GM12878 (cell line): ENCODE measurements at regions of chr10 and their contacts with region 1.

Region 1: DNA sequence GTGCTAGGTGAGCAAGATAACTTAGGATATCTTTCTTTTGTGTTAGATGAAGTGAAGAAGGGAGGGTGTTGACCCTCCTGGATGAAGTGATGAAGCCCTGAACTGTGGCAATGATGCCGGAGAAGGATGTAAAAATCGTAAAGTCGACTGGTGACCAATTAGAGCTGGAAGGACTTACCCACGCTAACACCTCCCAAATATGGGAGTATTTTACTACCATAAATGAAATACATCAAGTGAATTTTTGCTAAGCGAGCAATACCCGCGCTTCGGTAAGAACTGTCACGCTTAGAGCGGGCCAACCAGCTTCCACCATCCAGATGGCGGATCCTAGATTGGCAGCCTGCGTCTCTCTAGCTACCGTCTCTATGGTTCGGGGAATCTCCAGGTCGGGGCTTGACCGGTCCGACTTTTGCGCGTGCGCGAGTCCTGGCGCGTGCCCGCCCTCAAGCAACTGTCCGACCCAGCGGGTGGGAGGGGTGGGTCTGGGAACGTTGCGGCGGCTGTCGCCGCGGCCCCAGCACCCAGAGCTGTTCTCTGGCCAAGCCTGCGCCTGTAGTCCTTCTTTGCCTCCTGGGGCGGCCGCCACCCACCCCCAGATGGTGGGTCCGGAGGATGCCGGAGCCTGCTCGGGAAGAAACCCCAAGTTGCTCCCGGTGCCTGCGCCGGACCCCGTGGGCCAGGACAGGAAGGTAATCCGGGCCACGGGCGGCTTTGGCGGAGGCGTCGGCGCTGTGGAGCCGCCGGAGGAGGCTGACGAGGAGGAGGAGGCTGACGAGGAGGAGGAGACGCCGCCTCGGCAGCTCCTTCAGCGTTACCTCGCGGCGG is at the start of gene TBC1D12:
- DNase-seq: peak; percentile 79
- ATAC-seq: peak; percentile 81
- H3K4me3 ChIP-seq: peak within 1 kb of the TSS; percentile 83
- H3K27ac ChIP-seq: peak within 1 kb of the TSS; percentile 68
- H3K4me1 ChIP-seq: no peaks in the 10 kb centered on the region
- H3K27me3 ChIP-seq: no peaks in the 10 kb centered on the region
- CTCF ChIP-seq: no peak
- EP300 ChIP-seq: 0 out of 4 replicates have a peak, but pooled peaks of 1 of the 2 experiments have one; percentile 7
- POLR2A ChIP-seq: peak; percentile 77
- RAD21 ChIP-seq: no peak
- polyA plus RNA-seq, gene TBC1D12: 3.3 TPM

Region 2: GRCh38 chr10:93916257-93917063 is 485.8 kb before region 1 on chr10:
- CTCF ChIA-PET with region 1: no interaction called
- POLR2A ChIA-PET with region 1: no interaction called
- RAD21 ChIA-PET with region 1: no interaction called
- SMC1A ChIA-PET with region 1: no interaction called
- in situ Hi-C with region 1: no loop called
- intact Hi-C with region 1: no loop called
- DNase-seq: no peak
- ATAC-seq: peak; percentile 41; the same call in 2 of the 3 replicates
- H3K4me3 ChIP-seq: no peak overlapping the region
- H3K27ac ChIP-seq: no peak overlapping the region
- H3K4me1 ChIP-seq: no peaks in the 10 kb centered on the region
- H3K27me3 ChIP-seq: no peaks in the 10 kb centered on the region
- CTCF ChIP-seq: peak; percentile 33 to 41 (median 41); a peak in 5 of 6 replicates
- EP300 ChIP-seq: no peak
- POLR2A ChIP-seq: no peak
- RAD21 ChIP-seq: peak; percentile 46

Region 3: DNA sequence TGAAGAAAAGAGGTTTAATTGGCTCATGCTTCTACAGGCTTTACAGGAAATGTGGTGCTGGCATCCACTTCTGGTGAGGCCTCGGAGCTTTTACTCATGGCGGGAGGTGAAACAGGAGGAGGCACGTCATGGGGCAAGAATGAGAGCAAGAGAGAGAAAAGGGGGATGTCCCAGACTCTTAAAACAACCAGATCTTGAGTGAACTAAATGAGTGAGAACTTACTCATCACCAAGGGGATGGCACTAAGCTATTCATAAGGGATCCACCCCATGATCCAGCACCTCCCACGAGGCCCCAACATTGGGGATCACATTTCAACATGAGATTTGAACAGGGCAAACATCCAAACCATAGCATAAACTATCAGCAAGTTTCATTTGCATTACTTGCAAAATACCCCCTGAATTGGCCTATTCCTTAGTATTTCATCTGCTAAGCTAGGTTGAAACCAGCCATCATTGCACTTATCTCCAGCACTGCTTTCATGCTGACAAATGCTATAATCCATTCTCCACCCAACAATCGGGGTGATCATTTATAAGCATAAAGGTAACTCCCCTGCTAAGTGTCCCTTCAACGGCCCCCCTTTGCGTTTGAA is 218.5 kb before region 1 on chr10:
- CTCF ChIA-PET with region 1: no interaction called
- POLR2A ChIA-PET with region 1: no interaction called
- RAD21 ChIA-PET with region 1: no interaction called
- SMC1A ChIA-PET with region 1: no interaction called
- in situ Hi-C with region 1: no loop called
- intact Hi-C with region 1: no loop called
- DNase-seq: no peak
- ATAC-seq: peak; percentile 33; the same call in 2 of the 3 replicates
- H3K4me3 ChIP-seq: no peak overlapping the region
- H3K27ac ChIP-seq: no peak overlapping the region
- H3K4me1 ChIP-seq: no peaks in the 10 kb centered on the region
- H3K27me3 ChIP-seq: no peaks in the 10 kb centered on the region
- CTCF ChIP-seq: no peak
- EP300 ChIP-seq: no peak
- POLR2A ChIP-seq: no peak
- RAD21 ChIP-seq: no peak

Region 4: DNA sequence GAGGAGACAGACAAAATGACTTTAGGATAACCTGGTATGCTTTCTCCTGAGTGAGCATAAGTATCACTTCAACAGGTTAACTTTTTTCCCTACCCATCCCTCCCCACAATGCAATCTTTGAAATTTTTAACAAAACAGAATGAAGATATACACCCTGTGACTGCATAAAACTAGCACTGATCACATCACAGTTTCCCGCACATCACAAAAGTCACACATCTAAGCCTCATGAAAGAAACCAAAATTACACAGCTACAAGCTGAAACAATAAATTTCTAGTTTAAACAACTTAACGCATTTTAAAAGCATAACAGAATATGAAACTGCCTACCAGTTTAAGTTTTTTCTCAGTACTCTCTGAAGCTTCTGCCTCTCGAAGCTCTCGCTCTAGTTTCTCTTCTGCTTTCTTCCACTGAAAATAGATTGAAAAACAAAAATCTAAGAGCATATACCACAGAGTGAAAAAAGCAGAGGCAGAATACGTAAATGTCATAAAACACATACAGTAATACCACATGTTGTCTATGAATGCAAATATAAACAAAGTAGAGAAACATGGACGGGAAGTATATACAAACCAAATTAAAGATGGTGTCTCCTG is 57.6 kb before region 1 on chr10:
- CTCF ChIA-PET with region 1: interaction called, 4 read pairs
- POLR2A ChIA-PET with region 1: interaction called, 5 read pairs
- RAD21 ChIA-PET with region 1: interaction called, 6 read pairs
- SMC1A ChIA-PET with region 1: interaction called, 12 read pairs
- in situ Hi-C with region 1: no loop called
- intact Hi-C with region 1: no loop called
- DNase-seq: peak; percentile 58
- ATAC-seq: peak; percentile 95
- H3K4me3 ChIP-seq: peak overlapping the region; percentile 16; the same call in 1 of the 2 replicates
- H3K27ac ChIP-seq: peak overlapping the region; percentile 73
- H3K4me1 ChIP-seq: peaks cover 9% of the 10 kb centered on the region
- H3K27me3 ChIP-seq: no peaks in the 10 kb centered on the region
- CTCF ChIP-seq: no peak
- EP300 ChIP-seq: peak in 1 of 2 experiments; percentile 68
- POLR2A ChIP-seq: no peak
- RAD21 ChIP-seq: no peak

Region 5: DNA sequence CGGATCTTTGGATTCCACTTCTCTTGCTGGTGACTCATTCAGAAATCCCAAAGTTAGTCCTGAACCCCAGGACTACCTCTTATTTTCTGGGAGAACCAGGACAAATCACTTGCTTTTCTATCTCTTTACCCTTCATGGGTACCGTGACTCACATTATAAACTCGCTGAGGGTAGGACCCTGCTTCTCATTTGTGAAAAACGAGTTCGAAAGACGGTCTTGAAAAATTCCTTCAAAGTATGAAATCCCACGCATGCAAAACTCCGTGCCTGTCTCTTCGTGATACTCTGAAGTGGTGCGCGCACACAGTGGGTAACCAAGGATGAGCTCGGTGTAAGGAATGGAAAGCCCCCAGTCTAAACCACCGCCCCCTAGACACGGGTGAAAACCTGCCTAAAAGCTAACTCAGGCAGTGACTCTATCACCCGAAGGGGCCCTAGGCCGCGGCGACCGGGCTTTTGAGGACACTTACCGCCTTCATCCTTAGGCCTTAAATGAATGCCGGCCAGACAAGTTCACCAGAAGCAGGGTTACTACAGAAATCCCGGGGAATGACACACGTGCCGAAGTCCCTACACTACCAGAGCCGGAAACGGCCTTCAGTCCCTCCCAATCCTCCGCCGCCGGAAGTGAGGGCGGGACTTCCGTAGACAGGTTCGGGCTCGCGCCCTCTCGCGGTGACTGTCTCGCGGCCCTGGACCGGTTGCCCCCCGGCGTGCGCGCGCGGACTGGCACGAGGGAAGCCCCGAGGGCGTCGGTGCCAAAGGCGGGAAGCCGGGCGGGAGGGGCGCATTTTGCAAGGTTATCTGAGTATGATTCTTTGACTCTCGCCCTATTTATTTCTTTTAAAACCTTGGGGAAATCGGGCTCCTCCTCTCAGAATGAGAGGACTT is 39.6 kb before region 1 on chr10 and contains the start of gene NOC3L:
- CTCF ChIA-PET with region 1: interaction called, 13 read pairs
- POLR2A ChIA-PET with region 1: interaction called, 16 read pairs
- RAD21 ChIA-PET with region 1: interaction called, 9 read pairs
- SMC1A ChIA-PET with region 1: interaction called, 4 read pairs
- in situ Hi-C with region 1: no loop called
- intact Hi-C with region 1: loop called (anchors 1 kb)
- DNase-seq: peak; percentile 76
- ATAC-seq: peak; percentile 98
- H3K4me3 ChIP-seq: peak within 1 kb of the TSS; percentile 71
- H3K27ac ChIP-seq: peak within 1 kb of the TSS; percentile 85
- H3K4me1 ChIP-seq: peaks cover 4% of the 10 kb centered on the region; the same call in 1 of the 2 replicates
- H3K27me3 ChIP-seq: no peaks in the 10 kb centered on the region
- CTCF ChIP-seq: peak; percentile 63 to 87 (median 74); a peak in 5 of 6 replicates
- EP300 ChIP-seq: 0 out of 4 replicates have a peak, but pooled peaks of 1 of the 2 experiments have one; percentile 11
- POLR2A ChIP-seq: peak; percentile 87
- RAD21 ChIP-seq: 0 out of 2 replicates have a peak, but pooled peaks have one; percentile 21
- polyA plus RNA-seq, gene NOC3L: 37.7 to 38.2 TPM

Region 6: DNA sequence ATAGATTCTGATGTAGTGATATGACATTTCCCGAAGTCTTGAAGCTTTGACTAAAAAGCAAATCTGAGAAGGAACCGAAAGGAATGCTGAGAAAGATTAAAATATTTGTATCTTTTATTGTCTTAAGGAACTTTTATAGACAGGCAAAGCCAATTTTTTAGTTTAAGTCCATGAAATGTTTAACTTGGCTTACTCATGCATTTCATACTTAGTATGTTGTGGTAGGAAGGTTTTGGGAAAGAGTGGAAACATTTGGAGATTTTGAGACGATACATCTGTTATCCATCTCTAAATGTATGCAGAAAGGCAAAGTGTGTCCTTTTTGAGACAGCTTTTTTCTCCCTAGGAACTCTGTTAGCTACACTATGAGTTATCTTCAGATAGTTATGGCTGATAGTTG is 10.2 kb after region 1 on chr10:
- CTCF ChIA-PET with region 1: interaction called, 6 read pairs
- POLR2A ChIA-PET with region 1: interaction called, 14 read pairs
- RAD21 ChIA-PET with region 1: no interaction called
- SMC1A ChIA-PET with region 1: interaction called, 3 read pairs
- in situ Hi-C with region 1: no loop called
- intact Hi-C with region 1: no loop called
- DNase-seq: no peak
- ATAC-seq: no peak
- H3K4me3 ChIP-seq: no peak overlapping the region
- H3K27ac ChIP-seq: no peak overlapping the region
- H3K4me1 ChIP-seq: no peaks in the 10 kb centered on the region
- H3K27me3 ChIP-seq: no peaks in the 10 kb centered on the region
- CTCF ChIP-seq: no peak
- EP300 ChIP-seq: no peak
- POLR2A ChIP-seq: no peak
- RAD21 ChIP-seq: no peak

Region 7: DNA sequence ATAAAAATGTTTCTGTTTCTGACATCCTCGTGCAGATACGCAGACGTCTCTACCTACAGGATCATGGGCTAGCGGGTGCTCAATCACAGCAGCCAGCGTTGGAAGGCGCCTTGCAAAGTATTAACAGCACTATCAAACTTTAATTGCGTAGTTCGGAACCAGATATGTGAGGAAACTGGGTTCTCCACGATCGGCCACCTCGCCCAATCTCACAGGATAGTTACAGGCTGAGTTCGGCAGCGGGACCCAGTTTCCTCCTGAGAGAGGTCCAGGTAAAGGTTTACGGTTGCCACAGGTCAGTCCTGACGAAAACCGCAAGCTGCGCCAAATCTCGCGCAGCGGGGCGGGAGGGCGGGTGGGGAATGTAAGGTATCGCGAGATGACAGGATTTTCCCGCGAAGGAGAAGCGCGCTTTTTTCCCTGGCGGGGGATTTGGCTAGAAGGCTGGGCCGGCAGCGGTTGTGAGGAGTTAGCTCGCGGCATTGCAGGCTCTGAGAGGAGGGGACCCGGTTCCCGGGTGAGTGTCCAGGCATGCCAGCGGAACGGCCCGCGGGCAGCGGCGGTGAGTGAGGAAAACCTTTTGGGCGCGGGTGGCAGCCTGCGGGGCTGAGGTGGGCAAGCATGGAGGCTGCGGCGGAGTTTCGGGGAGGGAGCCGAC is 143.3 kb after region 1 on chr10 and contains the start of gene HELLS:
- CTCF ChIA-PET with region 1: no interaction called
- POLR2A ChIA-PET with region 1: no interaction called
- RAD21 ChIA-PET with region 1: no interaction called
- SMC1A ChIA-PET with region 1: no interaction called
- in situ Hi-C with region 1: no loop called
- intact Hi-C with region 1: loop called (anchors 5 kb)
- DNase-seq: peak; percentile 66
- ATAC-seq: peak; percentile 82
- H3K4me3 ChIP-seq: peak within 1 kb of the TSS; percentile 85
- H3K27ac ChIP-seq: peak within 1 kb of the TSS; percentile 92
- H3K4me1 ChIP-seq: peaks cover 5% of the 10 kb centered on the region
- H3K27me3 ChIP-seq: no peaks in the 10 kb centered on the region
- CTCF ChIP-seq: no peak
- EP300 ChIP-seq: no peak
- POLR2A ChIP-seq: peak; percentile 87
- RAD21 ChIP-seq: no peak
- polyA plus RNA-seq, gene HELLS: 33.9 to 46.6 TPM